CD8-positive, alpha-beta T cell (primary cell): ENCODE measurements at regions of chr11 and their contacts with region 1.

Region 1: DNA sequence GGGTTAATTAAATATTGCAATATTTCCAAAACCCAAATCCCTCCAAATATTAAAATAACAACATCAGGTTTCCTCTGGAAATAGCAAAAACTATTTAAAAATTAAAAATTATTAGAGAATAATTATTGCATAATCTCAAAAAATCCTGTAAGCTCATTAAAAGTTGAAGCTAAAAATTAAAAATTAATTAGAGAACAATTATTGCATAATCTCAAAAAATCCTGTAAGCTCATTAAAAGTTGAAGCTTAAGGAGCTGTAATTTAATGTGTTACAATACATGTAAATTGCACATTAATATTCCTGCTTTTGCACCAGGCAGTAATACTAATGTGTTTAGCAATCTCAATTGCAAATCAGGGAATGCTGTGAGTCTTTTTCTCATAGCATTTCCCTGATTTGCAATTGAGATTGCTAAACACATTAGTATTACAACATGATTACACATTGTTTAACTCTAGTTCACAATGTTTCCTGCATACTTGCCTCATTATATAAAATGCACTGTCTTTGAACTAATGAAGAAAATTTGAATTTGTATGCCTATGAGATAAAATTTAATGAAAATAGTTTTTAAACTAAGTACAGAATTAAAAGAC is 247.7 kb downstream of the GUCY1A2 start:
- DNase-seq: no peak
- ATAC-seq: no peak
- H3K4me3 ChIP-seq: no peak overlapping the region
- H3K4me3 Mint-ChIP-seq: no peak overlapping the region
- H3K27ac ChIP-seq: no peak overlapping the region
- H3K27ac Mint-ChIP-seq: no peak overlapping the region
- H3K4me1 ChIP-seq: no peaks in the 10 kb centered on the region
- H3K4me1 Mint-ChIP-seq: no peaks in the 10 kb centered on the region
- H3K27me3 ChIP-seq: no peaks in the 10 kb centered on the region
- H3K27me3 Mint-ChIP-seq: no peaks in the 10 kb centered on the region
- CTCF ChIP-seq: no peak

Region 2: GRCh38 chr11:105236664-105237063 is 1533.9 kb before region 1 on chr11:
- CTCF ChIA-PET with region 1: no interaction called
- POLR2A ChIA-PET with region 1: no interaction called
- intact Hi-C with region 1: loop called in 1 of 2 experiments (anchors 10 kb)
- DNase-seq: no peak
- ATAC-seq: no peak
- H3K4me3 ChIP-seq: no peak overlapping the region
- H3K4me3 Mint-ChIP-seq: no peak overlapping the region
- H3K27ac ChIP-seq: no peak overlapping the region
- H3K27ac Mint-ChIP-seq: no peak overlapping the region
- H3K4me1 ChIP-seq: no peaks in the 10 kb centered on the region
- H3K4me1 Mint-ChIP-seq: no peaks in the 10 kb centered on the region
- H3K27me3 ChIP-seq: no peaks in the 10 kb centered on the region
- H3K27me3 Mint-ChIP-seq: peaks cover 13% of the 10 kb centered on the region
- CTCF ChIP-seq: no peak